Mucosa of descending colon (tissue), 3 donors: ENCODE measurements at regions of chr1 and their contacts with region 1.

Region 1: DNA sequence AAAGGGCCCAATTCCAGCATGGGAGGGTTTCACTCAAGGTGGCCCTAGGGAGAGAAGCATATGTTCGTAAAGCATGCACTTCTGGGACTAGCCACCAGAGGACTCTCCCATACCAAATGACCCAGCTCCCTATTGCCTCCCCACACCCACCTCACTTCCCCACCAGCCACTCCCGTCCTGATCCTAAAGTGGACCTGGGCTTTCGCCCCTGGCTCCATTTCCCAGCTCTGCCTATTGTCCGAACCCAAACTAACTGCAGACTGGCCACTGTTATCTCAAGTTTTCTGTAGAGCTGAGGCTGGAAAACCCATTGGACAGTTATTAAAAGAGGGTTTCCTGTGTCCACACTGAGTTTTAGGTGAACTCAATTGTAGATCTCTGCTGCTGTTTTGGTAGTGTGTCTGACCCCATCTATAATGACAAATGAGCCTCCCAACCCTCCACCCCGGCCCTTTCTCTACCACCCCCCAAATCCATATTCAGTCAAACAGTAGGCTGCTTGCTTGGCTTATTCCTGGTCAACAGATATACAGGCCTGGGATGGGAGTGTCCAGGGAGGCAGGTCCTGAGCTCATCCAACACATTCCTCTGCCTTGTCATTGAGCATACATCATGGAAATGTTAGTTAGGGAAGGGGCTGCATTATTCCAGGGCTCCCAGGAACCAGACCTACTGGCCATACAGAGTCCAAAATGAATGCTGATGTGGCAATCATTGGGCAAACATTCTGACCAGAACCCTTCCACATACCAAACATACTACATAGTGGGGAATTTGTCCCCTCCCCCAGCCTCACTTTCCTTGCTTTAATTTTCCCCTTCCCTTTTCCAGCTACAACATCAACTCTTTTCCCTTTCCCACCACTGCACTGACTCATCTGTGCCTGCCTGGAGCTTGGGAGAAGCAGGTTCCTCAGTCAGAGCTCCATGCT is 59.2 kb downstream of the ABCA4 start:
- DNase-seq: peak in 2 of 3 donors; percentile 46 to 89
- ATAC-seq: peak; percentile 87
- H3K4me3 ChIP-seq: no peak overlapping the region
- H3K4me1 ChIP-seq: peaks cover 4% of the 10 kb centered on the region
- CTCF ChIP-seq: peak; percentile 80

Region 2: DNA sequence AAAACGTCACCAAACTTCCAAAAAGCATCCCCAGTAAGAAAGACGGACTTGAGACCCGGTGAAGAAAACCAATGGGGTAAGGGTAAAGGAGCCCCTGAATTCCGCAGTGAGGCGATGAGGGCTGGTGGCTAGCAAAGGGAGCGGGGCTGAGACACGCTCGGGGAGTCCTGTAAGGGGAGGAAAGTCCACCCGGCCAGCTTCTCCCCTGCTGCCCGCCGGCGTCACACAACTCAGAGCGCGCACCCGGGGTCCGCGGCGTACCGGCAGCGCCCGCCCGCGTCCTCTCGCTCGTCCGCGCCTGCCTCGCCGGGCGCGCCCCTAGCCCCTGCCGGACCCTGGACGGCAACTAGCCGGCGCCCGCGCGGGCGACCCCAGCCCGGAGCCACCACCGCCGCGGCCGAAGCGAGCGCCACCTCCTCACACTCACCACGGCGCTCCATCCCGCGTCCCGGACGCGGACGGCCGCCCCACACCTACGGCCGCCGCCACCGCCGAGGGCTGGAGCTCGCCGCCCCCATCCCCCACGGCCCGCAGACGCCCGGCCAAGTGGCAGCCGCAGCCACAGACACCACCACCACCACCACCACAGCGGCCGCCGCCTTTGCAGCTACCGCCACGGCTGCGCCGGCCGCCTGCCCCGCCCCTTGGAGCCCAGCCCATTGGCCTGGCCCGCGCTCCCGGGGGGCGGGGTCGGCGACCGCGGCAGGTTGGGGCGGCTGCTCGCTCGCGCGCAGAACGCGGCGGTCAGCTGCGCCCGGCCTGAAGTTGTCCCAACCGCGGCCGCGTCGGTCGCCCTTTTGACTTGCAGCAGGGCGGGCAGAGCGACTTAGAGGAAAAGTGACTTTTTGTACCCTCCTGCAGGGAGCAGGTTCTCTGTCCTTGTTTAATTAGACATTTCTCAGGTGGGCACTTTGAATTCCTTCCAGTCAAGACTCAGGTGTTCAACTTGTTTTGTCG is 185.6 kb after region 1 on chr1:
- intact Hi-C with region 1: loop called in 1 of 2 experiments (anchors 10 kb)
- DNase-seq: peak; percentile 79 to 85 (median 82)
- ATAC-seq: peak; percentile 99
- H3K4me3 ChIP-seq: peak overlapping the region; percentile 19
- H3K4me1 ChIP-seq: peaks cover 7% of the 10 kb centered on the region
- CTCF ChIP-seq: no peak

Region 3: GRCh38 chr1:94335950-94336349 is 274.2 kb after region 1 on chr1:
- intact Hi-C with region 1: loop called (anchors 5 kb)
- DNase-seq: peak in 2 of 3 donors; percentile 31 to 88
- ATAC-seq: peak; percentile 91
- H3K4me3 ChIP-seq: no peak overlapping the region
- H3K4me1 ChIP-seq: no peaks in the 10 kb centered on the region
- CTCF ChIP-seq: peak; percentile 40

Region 4: DNA sequence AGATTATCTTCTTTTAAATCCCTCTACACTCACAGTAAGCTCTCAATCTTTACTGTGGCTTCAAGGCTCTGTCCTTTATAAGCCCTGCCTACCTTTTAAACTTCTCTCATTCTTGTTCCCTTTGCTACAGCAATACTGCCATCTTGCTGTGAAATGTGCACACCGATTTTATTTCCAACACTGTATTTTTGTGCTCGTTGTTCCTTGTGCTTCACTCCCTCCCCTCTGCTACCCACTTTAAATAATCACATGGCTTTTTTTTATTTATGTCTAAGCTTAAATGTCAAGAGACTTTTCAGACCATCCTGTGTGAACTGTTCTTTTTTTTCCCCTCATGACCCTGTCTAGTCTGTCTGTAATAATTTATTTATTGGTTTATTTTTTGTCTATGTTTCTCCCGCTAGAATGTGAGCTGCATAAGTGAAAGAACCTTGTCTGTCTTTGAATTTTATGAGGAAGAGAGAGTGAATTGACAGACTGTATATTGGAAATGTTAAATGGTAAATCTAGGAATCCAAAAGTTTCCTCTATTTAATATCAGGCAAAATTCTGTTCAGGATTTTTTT is 402.1 kb after region 1 on chr1:
- intact Hi-C with region 1: loop called in 1 of 2 experiments (anchors 10 kb)
- DNase-seq: peak in 1 of 3 donors; percentile 67
- ATAC-seq: peak; percentile 92
- H3K4me3 ChIP-seq: no peak overlapping the region
- H3K4me1 ChIP-seq: peaks cover 6% of the 10 kb centered on the region
- CTCF ChIP-seq: peak; percentile 33